ENCODE measurements at regions of chr3 and their contacts with region 1.

Region 1: DNA sequence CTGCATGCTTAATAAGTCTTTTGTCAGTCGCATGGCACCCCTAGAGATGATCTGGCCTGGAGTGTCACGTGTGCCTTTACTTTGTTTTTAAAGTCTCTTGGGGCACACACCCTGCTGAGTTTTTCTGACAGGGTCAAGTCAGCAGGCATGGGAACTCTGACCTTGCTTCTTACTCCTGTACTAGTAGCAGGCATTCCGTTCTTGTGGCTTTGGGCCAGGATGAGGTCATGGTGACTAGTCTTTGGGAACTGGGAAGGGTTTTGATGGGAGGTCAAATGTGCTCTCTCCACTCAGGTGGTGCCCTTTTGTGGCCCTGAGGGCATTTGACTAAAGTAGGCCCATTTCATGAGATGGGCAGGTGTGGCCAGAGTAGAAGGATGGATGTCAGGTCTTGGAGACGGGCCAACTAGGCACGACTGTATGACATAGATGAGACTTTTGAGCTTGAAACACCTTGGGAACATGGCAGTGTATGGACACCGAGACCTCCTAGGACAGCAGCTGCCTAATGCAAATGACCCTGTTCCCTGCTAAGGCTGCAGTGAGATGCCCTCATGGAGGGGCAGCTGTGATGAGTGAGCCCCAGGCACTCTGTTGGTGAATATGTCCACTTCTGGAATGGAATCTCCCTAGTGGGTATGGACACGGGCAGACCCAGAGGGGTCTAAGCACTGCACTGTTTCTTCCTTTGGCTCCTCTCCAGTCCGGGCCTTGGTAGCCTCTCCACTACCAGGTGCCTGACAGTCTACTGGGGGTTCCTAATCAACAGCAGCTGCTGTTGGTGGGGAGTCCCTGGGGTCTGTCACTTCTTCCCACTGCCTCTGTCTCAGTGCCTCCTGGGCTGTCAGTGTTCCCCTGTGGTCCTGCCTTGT is 16.4 kb downstream of the SRPRB start:
- DNase-seq: no peak
- ATAC-seq: no peak
- H3K4me3 ChIP-seq: no peak overlapping the region
- H3K4me3 Mint-ChIP-seq: no peak overlapping the region
- H3K27ac ChIP-seq: no peak overlapping the region
- H3K27ac Mint-ChIP-seq: no peak overlapping the region
- H3K4me1 ChIP-seq: no peaks in the 10 kb centered on the region
- H3K4me1 Mint-ChIP-seq: no peaks in the 10 kb centered on the region
- H3K27me3 ChIP-seq: no peaks in the 10 kb centered on the region
- H3K27me3 Mint-ChIP-seq: no peaks in the 10 kb centered on the region
- CTCF ChIP-seq: no peak

Region 2: DNA sequence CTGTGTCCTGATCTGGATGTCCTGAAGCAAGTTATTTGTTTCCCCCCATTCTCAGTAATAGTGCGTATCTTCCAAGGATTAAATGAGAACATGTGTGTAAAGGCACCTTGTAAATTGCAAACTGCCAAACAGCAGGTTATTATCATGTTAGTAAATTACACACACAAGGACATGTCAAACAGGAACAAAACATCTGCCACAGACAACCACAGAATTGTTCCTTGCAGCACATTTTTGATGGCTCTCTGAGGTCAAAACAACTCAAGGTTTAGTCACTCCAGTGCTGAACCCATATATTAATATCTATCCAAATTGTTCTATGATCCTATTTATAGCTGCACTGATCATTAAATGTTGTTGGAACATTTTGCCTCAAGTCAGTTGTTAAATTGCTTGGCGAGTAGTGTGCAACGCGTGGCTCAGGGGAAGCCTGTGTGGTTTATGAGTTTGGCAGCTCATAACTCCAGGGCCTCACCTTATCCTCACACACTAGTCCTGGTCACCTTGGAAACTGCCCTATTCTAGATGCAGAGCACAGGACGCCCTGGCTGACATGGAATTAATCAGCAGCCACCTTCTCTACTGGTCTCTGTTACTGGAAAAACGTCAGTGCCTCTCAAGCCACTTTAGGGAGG is 294.8 kb before region 1 on chr3:
- CTCF ChIA-PET with region 1: no interaction called
- POLR2A ChIA-PET with region 1: no interaction called
- intact Hi-C with region 1: no loop called
- DNase-seq: no peak
- ATAC-seq: no peak
- H3K4me3 ChIP-seq: no peak overlapping the region
- H3K4me3 Mint-ChIP-seq: no peak overlapping the region
- H3K27ac ChIP-seq: no peak overlapping the region
- H3K27ac Mint-ChIP-seq: no peak overlapping the region
- H3K4me1 ChIP-seq: peaks cover under 1 to 3% of the 10 kb centered on the region in 2 donors
- H3K4me1 Mint-ChIP-seq: peaks cover 8% of the 10 kb centered on the region
- H3K27me3 ChIP-seq: no peaks in the 10 kb centered on the region
- H3K27me3 Mint-ChIP-seq: no peaks in the 10 kb centered on the region
- CTCF ChIP-seq: no peak

Region 3: DNA sequence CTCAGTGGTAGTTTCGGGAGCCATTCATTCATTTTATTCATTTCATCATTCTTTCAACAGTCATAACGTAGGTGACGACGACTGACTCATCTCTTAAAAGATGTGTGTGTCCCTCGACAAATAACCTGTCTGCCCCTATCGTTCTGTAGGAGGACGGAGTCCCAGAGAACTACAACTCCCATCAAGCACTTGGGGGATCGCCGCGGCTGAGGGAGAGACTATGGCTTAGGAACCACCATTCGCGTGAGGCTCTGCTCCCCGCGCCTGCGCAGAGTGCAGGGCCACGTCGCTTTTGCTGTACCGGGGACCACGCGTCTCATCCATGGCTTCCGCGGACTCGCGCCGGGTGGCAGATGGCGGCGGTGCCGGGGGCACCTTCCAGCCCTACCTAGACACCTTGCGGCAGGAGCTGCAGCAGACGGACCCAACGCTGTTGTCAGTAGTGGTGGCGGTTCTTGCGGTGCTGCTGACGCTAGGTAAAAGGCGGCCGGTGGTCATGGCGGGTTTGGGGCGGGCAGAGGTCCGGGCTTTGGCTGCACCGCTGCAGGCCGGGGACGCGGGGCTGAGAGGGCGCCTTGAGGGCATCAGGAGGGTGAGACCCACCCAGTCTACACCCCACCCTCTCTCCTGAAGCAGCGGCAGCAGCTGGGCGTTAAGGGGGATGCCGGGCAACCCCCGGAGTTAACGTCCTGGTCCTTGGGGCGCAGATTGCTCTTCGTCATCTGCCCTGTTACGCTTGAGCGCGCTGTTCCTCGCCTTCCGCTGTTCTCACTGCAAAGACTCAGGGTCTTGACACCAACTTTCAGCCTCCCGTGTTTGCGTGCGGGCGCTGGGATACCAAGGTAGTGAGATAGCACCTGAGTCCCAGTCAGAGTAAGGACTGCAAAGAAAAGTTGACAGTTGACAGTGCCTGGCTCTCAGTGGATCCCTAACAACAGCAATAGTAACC is 16.2 kb before region 1 on chr3 and contains the start of gene SRPRB:
- CTCF ChIA-PET with region 1: interaction called, 12 read pairs
- POLR2A ChIA-PET with region 1: no interaction called
- intact Hi-C with region 1: no loop called
- DNase-seq: peak; percentile 95
- ATAC-seq: peak; percentile 98
- H3K4me3 ChIP-seq: peak within 1 kb of the TSS; percentile 56 to 95 (median 87)
- H3K4me3 Mint-ChIP-seq: peak within 1 kb of the TSS; percentile 99
- H3K27ac ChIP-seq: peak within 1 kb of the TSS; percentile 75 to 80
- H3K27ac Mint-ChIP-seq: peak within 1 kb of the TSS; percentile 94
- H3K4me1 ChIP-seq: peaks cover 11 to 13% of the 10 kb centered on the region in 2 donors
- H3K4me1 Mint-ChIP-seq: peaks cover 18% of the 10 kb centered on the region
- H3K27me3 ChIP-seq: no peaks in the 10 kb centered on the region
- H3K27me3 Mint-ChIP-seq: no peaks in the 10 kb centered on the region
- CTCF ChIP-seq: no peak
- total RNA-seq, gene SRPRB: 28.8 and 29.7 TPM in 2 replicates

Region 4: GRCh38 chr3:133927540-133928066 is 105.6 kb after region 1 on chr3:
- CTCF ChIA-PET with region 1: interaction called, 5 read pairs
- POLR2A ChIA-PET with region 1: no interaction called
- intact Hi-C with region 1: loop called (anchors 1 kb)
- DNase-seq: peak; percentile 87
- ATAC-seq: peak; percentile 98
- H3K4me3 ChIP-seq: peak overlapping the region in 4 of 5 experiments; percentile 40 to 66 (median 56)
- H3K4me3 Mint-ChIP-seq: peak overlapping the region; percentile 79
- H3K27ac ChIP-seq: no peak overlapping the region
- H3K27ac Mint-ChIP-seq: no peak overlapping the region
- H3K4me1 ChIP-seq: peaks cover 12 to 14% of the 10 kb centered on the region in 2 donors
- H3K4me1 Mint-ChIP-seq: peaks cover 13% of the 10 kb centered on the region
- H3K27me3 ChIP-seq: peaks cover 0 to 26% (median 5%) of the 10 kb centered on the region in 4 experiments
- H3K27me3 Mint-ChIP-seq: peaks cover 21% of the 10 kb centered on the region
- CTCF ChIP-seq: peak; percentile 81

Measured in B cell (primary cell).